Mammary epithelial cell (primary cell): ENCODE measurements at regions of chr19 and their contacts with region 1.

Region 1: DNA sequence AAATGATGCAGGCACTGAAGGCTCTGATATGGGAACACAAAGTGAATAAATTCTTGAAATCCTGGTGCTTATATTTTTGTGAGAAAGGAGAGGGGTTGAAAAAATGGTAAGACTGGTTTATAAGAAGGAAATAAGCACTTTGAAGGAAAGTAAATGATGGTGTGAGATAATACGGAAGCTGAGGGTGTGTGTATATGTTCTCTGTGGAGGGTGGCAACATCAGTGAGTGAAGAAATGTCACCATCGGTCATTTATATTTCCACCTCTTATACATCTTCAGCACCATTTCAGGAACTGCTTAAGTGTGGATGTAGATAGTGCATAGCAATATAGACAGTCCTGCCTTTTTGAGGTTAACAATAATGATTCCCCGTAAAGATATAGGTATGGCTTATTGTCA is 17.5 kb downstream of the ZNF136 start:
- DNase-seq: no peak
- H3K4me3 ChIP-seq: no peak overlapping the region
- H3K27ac ChIP-seq: no peak overlapping the region
- H3K4me1 ChIP-seq: no peaks in the 10 kb centered on the region
- H3K27me3 ChIP-seq: no peaks in the 10 kb centered on the region
- CTCF ChIP-seq: no peak

Region 2: GRCh38 chr19:12272980-12273901 is 92.9 kb after region 1 on chr19:
- CTCF ChIA-PET with region 1: no interaction called
- dilution Hi-C with region 1: loop called (anchors 5 kb)
- in situ Hi-C with region 1: no loop called
- intact Hi-C with region 1: no loop called
- DNase-seq: no peak
- H3K4me3 ChIP-seq: no peak overlapping the region
- H3K27ac ChIP-seq: no peak overlapping the region
- H3K4me1 ChIP-seq: no peaks in the 10 kb centered on the region
- H3K27me3 ChIP-seq: no peaks in the 10 kb centered on the region
- CTCF ChIP-seq: no peak